ENCODE measurements at regions of chr1 and their contacts with region 1.

Region 1: GRCh38 chr1:71049951-71050598 is 2.5 kb upstream of the PTGER3 start:
- DNase-seq: peak in 3 of 9 experiments; percentile 14 to 72 (median 63)
- ATAC-seq: peak; percentile 57
- H3K4me3 ChIP-seq: no peak overlapping the region
- H3K4me3 Mint-ChIP-seq: no peak overlapping the region
- H3K27ac ChIP-seq: no peak overlapping the region
- H3K27ac Mint-ChIP-seq: no peak overlapping the region
- H3K4me1 ChIP-seq: peaks cover 14% of the 10 kb centered on the region
- H3K4me1 Mint-ChIP-seq: peaks cover 22% of the 10 kb centered on the region
- H3K27me3 ChIP-seq: peaks cover 14 to 17% of the 10 kb centered on the region in 2 experiments
- H3K27me3 Mint-ChIP-seq: peaks cover 32% of the 10 kb centered on the region
- CTCF ChIP-seq: peak; percentile 70

Region 2: DNA sequence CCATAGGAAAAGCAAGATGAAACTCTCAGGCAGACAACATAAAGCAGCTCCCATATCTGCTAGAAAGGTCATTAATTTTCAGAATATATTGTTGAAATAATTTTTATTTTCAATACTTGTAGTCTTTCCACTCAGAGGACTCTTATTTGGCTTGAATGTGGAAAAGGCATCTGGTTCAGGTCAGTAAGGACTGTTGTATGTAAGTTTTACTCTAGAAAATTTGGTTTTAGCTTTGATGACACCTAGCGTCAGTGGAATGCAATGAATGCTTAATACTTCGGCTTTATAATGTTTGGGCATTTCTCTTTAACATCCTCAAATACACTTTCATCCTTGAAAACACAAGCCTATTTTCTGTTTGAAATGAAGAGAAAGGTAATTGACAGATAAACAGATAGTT is 908.0 kb before region 1 on chr1:
- CTCF ChIA-PET with region 1: no interaction called
- POLR2A ChIA-PET with region 1: no interaction called
- intact Hi-C with region 1: loop called in 1 of 2 experiments (anchors 5 kb)
- DNase-seq: no peak
- ATAC-seq: no peak
- H3K4me3 ChIP-seq: no peak overlapping the region
- H3K4me3 Mint-ChIP-seq: no peak overlapping the region
- H3K27ac ChIP-seq: no peak overlapping the region
- H3K27ac Mint-ChIP-seq: no peak overlapping the region
- H3K4me1 ChIP-seq: no peaks in the 10 kb centered on the region
- H3K4me1 Mint-ChIP-seq: no peaks in the 10 kb centered on the region
- H3K27me3 ChIP-seq: no peaks in the 10 kb centered on the region
- H3K27me3 Mint-ChIP-seq: no peaks in the 10 kb centered on the region
- CTCF ChIP-seq: no peak

Region 3: DNA sequence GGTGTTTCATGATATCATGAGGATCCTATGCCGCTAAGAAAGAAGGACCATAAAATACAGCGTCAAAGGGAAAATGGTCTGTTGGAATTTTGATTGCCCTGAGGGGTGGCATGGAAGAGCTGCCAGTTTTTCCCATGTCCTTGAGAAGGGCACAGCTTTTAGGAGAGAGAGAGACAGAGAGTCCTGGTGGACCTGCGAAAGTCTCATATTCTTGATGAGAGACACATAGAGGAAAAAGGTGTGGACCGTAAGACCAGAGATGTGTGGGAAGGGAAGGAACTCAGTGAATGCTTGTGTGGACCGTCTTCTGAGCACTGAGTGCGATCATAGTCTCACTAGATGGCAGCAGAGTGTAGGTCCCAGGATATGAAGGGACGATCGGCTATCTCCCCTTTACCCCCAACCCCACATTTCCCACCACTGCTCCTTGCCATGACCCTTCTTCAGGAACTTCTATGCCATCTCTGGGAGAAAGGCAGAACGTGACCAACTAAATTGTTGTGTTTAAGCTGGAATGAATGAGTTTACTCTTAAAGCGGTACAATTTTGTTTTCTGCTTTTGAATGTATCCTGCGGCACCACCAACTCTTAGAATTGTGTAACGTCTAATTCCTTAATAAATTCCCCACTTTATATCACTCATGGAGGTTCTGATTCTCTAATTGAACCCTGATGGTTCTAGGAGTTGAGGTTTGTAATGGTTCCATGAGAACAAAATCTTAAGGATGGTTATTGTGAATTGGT is 521.3 kb before region 1 on chr1:
- CTCF ChIA-PET with region 1: interaction called, 14 read pairs
- POLR2A ChIA-PET with region 1: no interaction called
- intact Hi-C with region 1: loop called in 1 of 2 experiments (anchors 5 kb)
- DNase-seq: peak in 3 of 9 experiments; percentile 4 to 35 (median 18)
- ATAC-seq: no peak
- H3K4me3 ChIP-seq: no peak overlapping the region
- H3K4me3 Mint-ChIP-seq: no peak overlapping the region
- H3K27ac ChIP-seq: no peak overlapping the region
- H3K27ac Mint-ChIP-seq: no peak overlapping the region
- H3K4me1 ChIP-seq: no peaks in the 10 kb centered on the region
- H3K4me1 Mint-ChIP-seq: no peaks in the 10 kb centered on the region
- H3K27me3 ChIP-seq: no peaks in the 10 kb centered on the region
- H3K27me3 Mint-ChIP-seq: peaks cover 9% of the 10 kb centered on the region
- CTCF ChIP-seq: peak; percentile 29

Region 4: GRCh38 chr1:70685300-70686241 is 364.5 kb before region 1 on chr1:
- CTCF ChIA-PET with region 1: interaction called, 8 read pairs
- POLR2A ChIA-PET with region 1: no interaction called
- intact Hi-C with region 1: loop called in 1 of 2 experiments (anchors 2 kb)
- DNase-seq: peak in 8 of 9 experiments; percentile 7 to 61 (median 30)
- ATAC-seq: peak; percentile 55
- H3K4me3 ChIP-seq: no peak overlapping the region
- H3K4me3 Mint-ChIP-seq: no peak overlapping the region
- H3K27ac ChIP-seq: no peak overlapping the region
- H3K27ac Mint-ChIP-seq: no peak overlapping the region
- H3K4me1 ChIP-seq: no peaks in the 10 kb centered on the region
- H3K4me1 Mint-ChIP-seq: no peaks in the 10 kb centered on the region
- H3K27me3 ChIP-seq: no peaks in the 10 kb centered on the region
- H3K27me3 Mint-ChIP-seq: peaks cover 11% of the 10 kb centered on the region
- CTCF ChIP-seq: peak; percentile 66

Region 5: DNA sequence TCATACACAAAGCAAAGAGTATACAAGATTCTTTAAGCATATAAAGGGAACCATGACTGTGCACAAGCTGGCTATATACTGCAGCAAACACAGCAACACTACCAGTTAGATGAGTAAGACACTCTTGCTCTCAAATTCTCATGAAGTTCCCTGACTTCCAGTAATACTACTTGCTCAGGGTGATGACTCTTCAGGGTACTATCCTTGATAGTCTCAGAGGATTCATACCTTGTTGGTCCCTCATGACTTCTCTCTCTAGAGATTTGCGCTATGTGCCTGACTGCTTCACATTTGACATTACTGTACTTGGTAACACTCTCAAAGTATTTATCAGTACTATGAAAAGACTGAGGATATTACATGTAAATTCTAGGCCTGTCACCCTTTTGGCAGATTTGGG is 190.6 kb after region 1 on chr1:
- CTCF ChIA-PET with region 1: no interaction called
- POLR2A ChIA-PET with region 1: no interaction called
- intact Hi-C with region 1: no loop called
- DNase-seq: no peak
- ATAC-seq: no peak
- H3K4me3 ChIP-seq: no peak overlapping the region
- H3K4me3 Mint-ChIP-seq: no peak overlapping the region
- H3K27ac ChIP-seq: no peak overlapping the region
- H3K27ac Mint-ChIP-seq: no peak overlapping the region
- H3K4me1 ChIP-seq: no peaks in the 10 kb centered on the region
- H3K4me1 Mint-ChIP-seq: no peaks in the 10 kb centered on the region
- H3K27me3 ChIP-seq: no peaks in the 10 kb centered on the region
- H3K27me3 Mint-ChIP-seq: no peaks in the 10 kb centered on the region
- CTCF ChIP-seq: no peak

Region 6: DNA sequence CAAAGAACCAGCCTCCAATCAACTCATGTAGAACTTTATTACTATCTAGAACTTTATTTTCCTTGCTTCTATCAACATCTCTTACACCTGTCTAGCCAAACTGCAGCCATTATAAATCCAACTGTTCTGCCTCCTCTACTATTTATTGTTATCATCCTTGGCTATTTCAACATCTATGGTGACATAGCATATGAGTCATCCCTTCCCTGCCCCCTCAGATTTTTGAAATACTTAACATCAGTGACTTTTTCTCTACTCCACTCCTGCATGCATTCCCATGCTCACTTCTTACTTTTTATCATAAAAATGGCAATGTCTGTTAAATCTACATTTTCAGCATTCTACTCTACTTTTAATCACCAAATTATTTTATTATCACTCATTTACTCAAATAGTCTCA is 1777.2 kb after region 1 on chr1:
- CTCF ChIA-PET with region 1: no interaction called
- POLR2A ChIA-PET with region 1: no interaction called
- intact Hi-C with region 1: no loop called
- DNase-seq: no peak
- ATAC-seq: no peak
- H3K4me3 ChIP-seq: no peak overlapping the region
- H3K4me3 Mint-ChIP-seq: no peak overlapping the region
- H3K27ac ChIP-seq: no peak overlapping the region
- H3K27ac Mint-ChIP-seq: no peak overlapping the region
- H3K4me1 ChIP-seq: no peaks in the 10 kb centered on the region
- H3K4me1 Mint-ChIP-seq: no peaks in the 10 kb centered on the region
- H3K27me3 ChIP-seq: no peaks in the 10 kb centered on the region
- H3K27me3 Mint-ChIP-seq: no peaks in the 10 kb centered on the region
- CTCF ChIP-seq: no peak

Measured in CD8-positive, alpha-beta T cell (primary cell).